A673 (cell line): ENCODE measurements at regions of chr20 and their contacts with region 1.

Region 1: DNA sequence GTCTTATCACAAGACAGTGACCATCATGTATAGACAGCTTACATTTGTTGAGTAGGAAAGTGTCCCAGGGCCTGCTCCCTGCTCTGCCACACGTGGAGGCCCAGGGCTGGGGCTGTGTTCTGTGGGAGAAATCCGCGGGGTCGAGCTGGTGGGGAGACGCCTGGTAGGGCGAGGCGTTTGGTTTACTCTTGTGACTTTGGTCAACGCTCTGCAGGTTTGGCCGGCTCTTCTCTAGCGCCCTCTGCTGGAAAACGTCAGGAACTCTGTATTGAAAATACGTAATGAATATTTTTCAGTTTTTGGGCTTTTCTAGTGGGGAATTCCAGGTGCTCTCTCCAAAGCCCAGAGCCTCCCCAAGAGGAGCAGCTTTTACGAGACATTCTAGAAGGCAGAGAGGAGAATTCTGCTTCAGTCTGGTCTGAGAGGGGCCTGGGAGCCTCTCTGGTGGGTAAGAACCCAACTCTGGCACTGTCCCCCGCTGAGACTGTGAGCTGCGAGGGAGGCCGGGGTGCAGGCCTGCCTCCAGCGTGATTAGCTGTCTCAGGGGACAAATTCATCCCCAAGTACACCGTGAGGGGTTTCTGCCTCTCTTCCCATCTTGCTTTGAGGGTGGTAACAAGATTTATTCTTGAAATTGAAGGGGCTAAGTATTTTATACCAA is 112.6 kb upstream of the RALGAPA2 start:
- DNase-seq: peak; percentile 83
- H3K4me3 ChIP-seq: no peak overlapping the region
- H3K27ac ChIP-seq: peak overlapping the region; percentile 40
- H3K4me1 ChIP-seq: peaks cover 17% of the 10 kb centered on the region
- H3K27me3 ChIP-seq: no peaks in the 10 kb centered on the region
- CTCF ChIP-seq: peak; percentile 82

Region 2: GRCh38 chr20:20593447-20594170 is 231.4 kb before region 1 on chr20:
- CTCF ChIA-PET with region 1: interaction called, 8 read pairs
- POLR2A ChIA-PET with region 1: no interaction called
- intact Hi-C with region 1: loop called (anchors 10 kb)
- DNase-seq: peak; percentile 78
- H3K4me3 ChIP-seq: no peak overlapping the region
- H3K27ac ChIP-seq: no peak overlapping the region
- H3K4me1 ChIP-seq: no peaks in the 10 kb centered on the region
- H3K27me3 ChIP-seq: no peaks in the 10 kb centered on the region
- CTCF ChIP-seq: peak; percentile 75

Region 3: GRCh38 chr20:20664795-20665589 is 160.1 kb before region 1 on chr20:
- CTCF ChIA-PET with region 1: interaction called, 12 read pairs
- POLR2A ChIA-PET with region 1: no interaction called
- intact Hi-C with region 1: loop called (anchors 1 kb)
- DNase-seq: peak; percentile 70
- H3K4me3 ChIP-seq: no peak overlapping the region
- H3K27ac ChIP-seq: no peak overlapping the region
- H3K4me1 ChIP-seq: peaks cover 28% of the 10 kb centered on the region
- H3K27me3 ChIP-seq: no peaks in the 10 kb centered on the region
- CTCF ChIP-seq: peak; percentile 76